Activated CD4-positive, alpha-beta memory T cell treated with anti-CD3 and anti-CD28 coated beads for 36 hours (primary cell): ENCODE measurements at regions of chr1 and their contacts with region 1.

Region 1: GRCh38 chr1:70134148-70134547 is 71.2 kb downstream of the LRRC40 start:
- DNase-seq: no peak
- H3K4me3 Mint-ChIP-seq: no peak overlapping the region
- H3K27ac Mint-ChIP-seq: no peak overlapping the region
- H3K4me1 Mint-ChIP-seq: peaks cover 3% of the 10 kb centered on the region
- H3K27me3 Mint-ChIP-seq: peaks cover 4% of the 10 kb centered on the region

Region 2: DNA sequence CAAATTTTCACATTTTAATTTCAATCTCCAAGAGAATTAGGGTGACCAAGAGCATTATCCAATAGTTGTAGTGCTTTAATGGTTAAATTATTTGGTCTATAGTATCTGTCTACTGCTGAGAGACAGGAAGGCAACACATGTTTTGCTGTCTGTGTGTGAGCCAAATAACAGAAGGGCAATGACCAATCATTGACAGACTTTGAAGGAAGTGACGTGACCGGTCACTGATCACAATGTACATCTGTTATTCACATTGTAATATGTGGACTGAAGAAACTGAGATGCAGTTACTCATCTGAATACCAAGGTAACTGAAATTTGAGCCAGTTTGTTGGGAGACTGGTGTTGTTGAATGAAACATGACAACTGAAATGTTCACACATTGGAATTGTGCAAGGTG is 125.5 kb before region 1 on chr1:
- CTCF ChIA-PET with region 1: no interaction called
- POLR2A ChIA-PET with region 1: no interaction called
- intact Hi-C with region 1: no loop called
- DNase-seq: no peak
- H3K4me3 Mint-ChIP-seq: no peak overlapping the region
- H3K27ac Mint-ChIP-seq: no peak overlapping the region
- H3K4me1 Mint-ChIP-seq: no peaks in the 10 kb centered on the region
- H3K27me3 Mint-ChIP-seq: no peaks in the 10 kb centered on the region

Region 3: DNA sequence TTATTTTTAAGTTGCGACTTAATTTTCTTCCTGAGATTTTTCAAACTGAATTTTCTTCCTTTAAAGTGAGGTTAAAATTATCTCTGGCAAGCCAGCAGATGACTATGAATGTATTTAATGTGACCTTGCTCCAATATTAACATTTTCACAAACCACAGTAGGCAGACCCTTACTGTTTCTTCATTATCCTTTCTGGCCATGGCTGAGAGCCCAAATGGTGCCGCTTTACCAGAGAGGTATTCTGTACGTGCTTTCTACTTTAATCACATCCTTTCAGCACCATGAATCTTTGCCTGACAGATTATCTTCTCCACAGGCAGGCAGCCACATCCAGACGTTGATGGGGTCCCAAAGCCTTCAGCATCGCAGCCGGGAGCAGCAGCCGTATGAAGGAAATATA is 58.4 kb before region 1 on chr1:
- CTCF ChIA-PET with region 1: no interaction called
- POLR2A ChIA-PET with region 1: no interaction called
- intact Hi-C with region 1: no loop called
- DNase-seq: no peak
- H3K4me3 Mint-ChIP-seq: no peak overlapping the region
- H3K27ac Mint-ChIP-seq: no peak overlapping the region
- H3K4me1 Mint-ChIP-seq: no peaks in the 10 kb centered on the region
- H3K27me3 Mint-ChIP-seq: peaks cover 10% of the 10 kb centered on the region

Region 4: GRCh38 chr1:70205434-70206118 is 71.4 kb after region 1 on chr1 and contains the start of gene LRRC40:
- CTCF ChIA-PET with region 1: no interaction called
- POLR2A ChIA-PET with region 1: no interaction called
- intact Hi-C with region 1: loop called (anchors 1 kb)
- DNase-seq: peak; percentile 98
- H3K4me3 Mint-ChIP-seq: peak within 1 kb of the TSS; percentile 99
- H3K27ac Mint-ChIP-seq: peak within 1 kb of the TSS; percentile 94
- H3K4me1 Mint-ChIP-seq: peaks cover 63% of the 10 kb centered on the region
- H3K27me3 Mint-ChIP-seq: no peaks in the 10 kb centered on the region
- total RNA-seq, gene LRRC40: 22.1 to 24.7 TPM

Region 5: DNA sequence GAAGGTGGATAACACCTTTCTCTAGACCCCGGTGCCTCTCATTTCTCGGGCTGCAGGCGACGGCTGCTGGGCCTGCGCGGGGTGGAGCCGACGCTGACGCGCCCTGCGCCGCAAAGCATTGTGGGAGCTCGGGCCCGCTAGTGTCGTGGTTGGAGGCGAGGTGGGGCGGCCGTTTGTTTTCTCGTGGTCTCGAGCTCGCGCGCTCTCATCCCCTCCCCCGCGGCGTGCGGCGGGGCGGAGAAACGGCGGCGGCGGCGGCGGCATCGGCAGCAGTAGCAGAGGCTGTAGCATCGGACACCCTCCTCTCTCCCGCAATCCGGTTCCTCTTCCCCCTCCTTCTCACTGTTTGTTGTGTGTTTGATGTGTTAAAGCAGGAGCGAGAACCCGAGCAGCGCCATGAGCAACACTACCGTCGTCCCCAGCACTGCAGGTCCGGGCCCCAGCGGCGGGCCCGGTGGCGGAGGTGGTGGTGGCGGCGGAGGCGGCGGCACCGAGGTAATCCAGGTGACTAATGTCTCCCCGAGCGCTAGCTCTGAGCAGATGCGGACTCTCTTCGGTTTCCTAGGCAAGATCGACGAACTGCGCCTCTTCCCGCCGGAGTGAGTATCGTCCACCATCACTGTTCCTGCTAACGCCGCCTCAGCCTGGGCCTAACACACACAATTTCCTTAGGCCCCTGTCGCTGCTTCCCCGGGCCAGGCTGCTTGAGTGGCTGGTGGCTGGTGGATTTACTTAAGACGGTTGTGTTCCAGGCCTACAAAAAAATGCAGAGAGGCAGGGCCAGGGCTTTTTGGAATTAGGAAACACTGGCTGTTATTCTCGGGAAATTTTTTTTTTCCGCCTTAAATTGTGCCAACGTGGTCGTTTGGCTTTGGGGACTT is 87.3 kb after region 1 on chr1 and contains the start of gene SRSF11:
- CTCF ChIA-PET with region 1: interaction called, 3 read pairs
- POLR2A ChIA-PET with region 1: no interaction called
- intact Hi-C with region 1: loop called (anchors 5 kb)
- DNase-seq: peak; percentile 98
- H3K4me3 Mint-ChIP-seq: peak within 1 kb of the TSS; percentile 91
- H3K27ac Mint-ChIP-seq: peak within 1 kb of the TSS; percentile 97
- H3K4me1 Mint-ChIP-seq: peaks cover 39% of the 10 kb centered on the region
- H3K27me3 Mint-ChIP-seq: no peaks in the 10 kb centered on the region
- total RNA-seq, gene SRSF11: 156 to 164 TPM

Region 6: GRCh38 chr1:70397014-70397413 is 262.9 kb after region 1 on chr1:
- CTCF ChIA-PET with region 1: no interaction called
- POLR2A ChIA-PET with region 1: no interaction called
- intact Hi-C with region 1: loop called (anchors 10 kb)
- DNase-seq: no peak
- H3K4me3 Mint-ChIP-seq: no peak overlapping the region
- H3K27ac Mint-ChIP-seq: no peak overlapping the region
- H3K4me1 Mint-ChIP-seq: no peaks in the 10 kb centered on the region
- H3K27me3 Mint-ChIP-seq: peaks cover 7% of the 10 kb centered on the region

Region 7: GRCh38 chr1:70487910-70488665 is 353.9 kb after region 1 on chr1:
- CTCF ChIA-PET with region 1: interaction called, 4 read pairs
- POLR2A ChIA-PET with region 1: no interaction called
- intact Hi-C with region 1: loop called (anchors 2 kb)
- DNase-seq: no peak
- H3K4me3 Mint-ChIP-seq: no peak overlapping the region
- H3K27ac Mint-ChIP-seq: no peak overlapping the region
- H3K4me1 Mint-ChIP-seq: no peaks in the 10 kb centered on the region
- H3K27me3 Mint-ChIP-seq: no peaks in the 10 kb centered on the region

Region 8: GRCh38 chr1:70509996-70510876 is 376.1 kb after region 1 on chr1:
- CTCF ChIA-PET with region 1: interaction called, 5 read pairs
- POLR2A ChIA-PET with region 1: no interaction called
- intact Hi-C with region 1: loop called (anchors 1 kb)
- DNase-seq: no peak
- H3K4me3 Mint-ChIP-seq: no peak overlapping the region
- H3K27ac Mint-ChIP-seq: no peak overlapping the region
- H3K4me1 Mint-ChIP-seq: no peaks in the 10 kb centered on the region
- H3K27me3 Mint-ChIP-seq: peaks cover 14% of the 10 kb centered on the region

Region 9: GRCh38 chr1:71049951-71050598 is 915.9 kb after region 1 on chr1:
- CTCF ChIA-PET with region 1: interaction called, 3 read pairs
- POLR2A ChIA-PET with region 1: no interaction called
- intact Hi-C with region 1: loop called (anchors 5 kb)
- DNase-seq: no peak
- H3K4me3 Mint-ChIP-seq: no peak overlapping the region
- H3K27ac Mint-ChIP-seq: no peak overlapping the region
- H3K4me1 Mint-ChIP-seq: peaks cover 18% of the 10 kb centered on the region
- H3K27me3 Mint-ChIP-seq: peaks cover 30% of the 10 kb centered on the region